ENCODE measurements at regions of chr9 and their contacts with region 1.

Region 1: DNA sequence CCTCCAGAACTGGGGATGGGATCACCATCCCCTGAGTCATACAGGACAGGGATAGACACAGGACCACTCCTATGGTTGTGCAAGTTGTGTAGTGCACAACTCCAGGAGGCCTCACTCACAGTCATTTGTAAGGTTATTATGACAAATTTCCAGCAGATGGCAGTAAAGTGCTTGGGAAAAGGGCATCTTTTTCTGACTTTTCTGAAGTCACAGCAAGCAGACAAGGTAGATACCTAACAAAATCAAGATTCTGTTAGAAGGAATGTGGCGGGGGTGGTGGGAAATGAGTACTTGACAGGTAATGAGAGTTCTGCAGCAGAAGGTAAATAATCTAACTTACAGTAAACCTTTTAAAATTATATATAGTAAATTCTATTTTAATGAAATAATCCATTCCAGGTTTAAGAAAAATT is 16.7 kb upstream of the KIF27 start:
- DNase-seq: no peak
- ATAC-seq: peak; percentile 67

Region 2: GRCh38 chr9:83980395-83981125 is 42.6 kb after region 1 on chr9 and contains the start of gene RMI1:
- intact Hi-C with region 1: no loop called
- DNase-seq: peak; percentile 100
- ATAC-seq: peak; percentile 94
- total RNA-seq, gene RMI1: 7.6 TPM

Region 3: GRCh38 chr9:84261082-84261746 is 323.3 kb after region 1 on chr9:
- intact Hi-C with region 1: loop called (anchors 5 kb)
- DNase-seq: peak; percentile 90
- ATAC-seq: peak; percentile 99

Region 4: DNA sequence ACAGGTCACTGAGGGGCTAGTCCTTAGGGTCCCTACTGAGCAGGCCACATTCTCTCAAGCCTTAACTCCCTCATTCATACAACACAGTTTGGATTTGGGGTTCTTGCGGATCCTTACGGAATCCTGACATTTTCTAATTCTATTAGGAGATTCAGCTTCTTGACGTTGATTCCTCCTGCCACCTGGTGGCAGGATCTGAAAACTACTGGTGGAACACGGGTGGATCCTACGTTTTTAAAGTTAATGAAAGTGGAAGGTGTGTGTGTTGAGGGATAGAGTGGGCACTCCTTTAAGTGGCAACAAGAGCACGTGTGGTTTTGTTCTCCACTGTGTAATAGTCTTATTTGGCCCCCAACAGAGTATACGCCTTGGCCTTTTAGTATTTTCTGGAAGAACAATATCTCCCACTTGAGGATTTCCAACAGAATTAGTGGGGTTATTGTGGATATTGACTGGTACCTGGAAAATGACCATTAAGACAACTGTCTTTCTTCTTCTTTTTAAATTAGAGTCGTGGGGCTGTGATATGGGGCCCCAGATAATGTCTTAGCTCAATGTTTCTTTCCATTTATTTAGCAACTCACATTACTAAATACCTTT is 377.5 kb after region 1 on chr9:
- intact Hi-C with region 1: loop called (anchors 5 kb)
- DNase-seq: peak; percentile 58
- ATAC-seq: peak; percentile 74